Motor neuron (in vitro differentiated cells): ENCODE measurements at regions of chr12 and their contacts with region 1.

Region 1: GRCh38 chr12:106386813-106387535 is 29.4 kb downstream of the POLR3B start:
- ATAC-seq: peak in 3 of 8 experiments; percentile 54 to 88 (median 72)
- H3K4me3 ChIP-seq: no peak overlapping the region
- H3K27ac ChIP-seq: no peak overlapping the region
- H3K4me1 ChIP-seq: peaks cover 0 to 16% of the 10 kb centered on the region in 2 donors

Region 2: GRCh38 chr12:106106884-106107283 is 280.1 kb before region 1 on chr12:
- in situ Hi-C with region 1: no loop called
- ATAC-seq: peak in 5 of 8 experiments; percentile 2 to 20 (median 11)
- H3K4me3 ChIP-seq: no peak overlapping the region
- H3K27ac ChIP-seq: peak overlapping the region; percentile 26 to 49
- H3K4me1 ChIP-seq: peaks cover 57 to 59% of the 10 kb centered on the region in 2 donors

Region 3: DNA sequence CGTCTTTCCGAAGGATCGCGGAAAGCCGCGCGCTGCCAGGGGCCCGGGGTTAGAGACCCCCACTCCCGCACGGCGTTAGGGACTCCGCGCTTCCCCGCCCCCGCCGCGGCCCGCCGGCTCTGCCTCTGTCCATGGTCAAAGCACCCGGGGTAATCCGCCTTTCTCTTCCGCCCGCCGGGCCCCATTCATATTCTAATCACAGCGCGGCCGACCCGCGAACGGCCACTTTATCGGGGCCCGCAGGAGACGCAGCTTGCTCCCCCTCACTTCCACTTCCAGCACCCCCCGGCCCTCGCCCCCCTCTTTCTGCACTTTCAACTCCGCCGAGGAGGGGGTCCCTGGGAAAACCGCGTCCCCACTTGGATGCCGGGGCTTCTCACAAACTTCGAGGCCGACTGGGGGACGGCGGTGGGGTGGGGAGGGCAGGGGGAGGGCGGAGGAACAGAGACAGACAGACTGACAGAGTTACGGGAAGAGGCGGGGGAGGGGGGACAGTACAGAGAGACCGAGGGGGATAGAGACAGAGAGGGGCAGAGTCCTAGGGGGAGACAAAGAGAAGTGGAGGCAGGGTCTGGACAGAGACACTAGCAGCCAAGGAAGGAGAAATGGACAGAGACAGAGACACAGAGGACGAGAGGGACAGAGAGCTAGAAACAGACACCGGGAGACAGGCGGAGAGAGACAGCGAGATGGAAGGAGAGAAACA is 194.7 kb after region 1 on chr12:
- in situ Hi-C with region 1: loop called in 1 of 9 experiments (anchors 25 kb)
- ATAC-seq: peak; percentile 43 to 66 (median 51)
- H3K4me3 ChIP-seq: peak overlapping the region; percentile 42 to 92 (median 78)
- H3K27ac ChIP-seq: peak overlapping the region; percentile 89 to 91
- H3K4me1 ChIP-seq: peaks cover 0 to 6% of the 10 kb centered on the region in 2 donors

Region 4: GRCh38 chr12:106605254-106605653 is 218.3 kb after region 1 on chr12:
- in situ Hi-C with region 1: no loop called
- ATAC-seq: no peak
- H3K4me3 ChIP-seq: no peak overlapping the region
- H3K27ac ChIP-seq: no peak overlapping the region
- H3K4me1 ChIP-seq: peaks cover 17 to 28% of the 10 kb centered on the region in 2 donors

Region 5: DNA sequence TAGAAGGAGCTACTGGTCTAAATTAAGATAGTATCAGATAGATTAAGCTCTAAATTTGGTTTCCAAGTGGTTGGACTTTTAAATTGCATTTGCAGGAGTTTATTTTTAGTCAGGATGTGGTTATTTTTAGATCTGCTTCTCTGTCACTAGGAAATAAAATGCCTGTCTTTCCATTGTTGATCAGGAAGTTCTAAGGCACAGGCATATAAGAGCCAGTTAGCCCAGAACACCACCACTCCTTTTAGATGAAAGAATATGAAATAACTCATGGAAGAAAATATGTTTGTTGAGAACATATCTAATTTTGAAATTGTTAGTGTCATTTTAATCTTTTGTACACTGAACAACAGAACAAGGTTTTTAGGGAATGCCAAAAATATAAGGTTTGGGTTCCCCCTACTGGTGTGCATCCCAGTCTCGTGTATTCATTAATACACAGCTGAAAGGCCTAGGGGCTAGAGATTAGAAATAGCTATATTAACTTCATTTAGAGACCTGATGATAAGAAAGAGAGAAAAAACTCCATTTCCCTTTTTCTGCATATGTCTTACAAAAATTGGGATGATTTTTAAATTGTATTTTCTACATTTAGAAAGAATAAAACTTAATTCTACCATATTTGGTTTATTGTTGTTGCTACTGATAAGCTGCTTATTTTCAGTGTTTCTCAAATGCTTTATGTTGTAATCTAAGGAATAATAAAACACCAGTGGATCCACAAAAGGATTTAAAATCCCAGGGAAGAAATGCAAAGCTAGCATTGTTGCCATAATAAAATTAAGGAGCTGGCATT is 454.7 kb after region 1 on chr12:
- in situ Hi-C with region 1: loop called in 3 of 9 experiments (anchors 25 kb)
- ATAC-seq: peak; percentile 36 to 91 (median 56)
- H3K4me3 ChIP-seq: no peak overlapping the region
- H3K27ac ChIP-seq: no peak overlapping the region
- H3K4me1 ChIP-seq: peaks cover 22 to 26% of the 10 kb centered on the region in 2 donors

Region 6: GRCh38 chr12:106903241-106903945 is 516.4 kb after region 1 on chr12:
- in situ Hi-C with region 1: loop called in 4 of 9 experiments (anchors 25 kb)
- ATAC-seq: peak; percentile 87 to 99 (median 97)
- H3K4me3 ChIP-seq: peak overlapping the region; percentile 25 to 38 (median 27)
- H3K27ac ChIP-seq: no peak overlapping the region
- H3K4me1 ChIP-seq: peaks cover 14 to 16% of the 10 kb centered on the region in 2 donors

Region 7: DNA sequence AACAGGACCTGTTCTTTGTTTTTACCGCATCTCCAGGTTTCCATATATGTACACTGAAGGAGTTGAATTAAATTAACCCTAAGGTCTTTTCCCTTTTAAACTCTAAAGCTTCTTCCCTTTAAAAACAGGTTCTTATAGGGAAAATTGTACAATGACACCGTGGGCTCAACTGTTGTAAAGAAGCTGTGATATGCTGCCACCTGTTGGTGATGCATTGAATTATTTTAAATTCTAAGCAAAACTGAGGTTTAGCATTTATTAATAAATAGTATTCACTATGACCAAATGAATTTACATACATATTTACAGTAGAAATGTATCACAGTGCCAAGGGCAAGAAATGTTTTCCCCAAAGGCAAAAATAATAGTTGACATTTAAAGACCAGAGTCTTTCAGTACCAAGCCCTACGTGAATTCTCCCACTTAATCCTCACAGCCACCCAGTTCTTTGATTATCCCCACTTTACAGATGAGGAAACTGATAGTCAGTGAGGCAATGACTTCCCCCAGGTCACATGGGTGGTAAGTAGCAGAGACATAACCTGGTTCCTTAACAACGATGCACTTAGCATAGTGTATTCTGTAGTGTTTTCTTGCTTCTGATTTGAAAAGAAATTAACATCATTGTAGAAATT is 533.1 kb after region 1 on chr12:
- in situ Hi-C with region 1: loop called in 6 of 9 experiments (anchors 10 to 25 kb)
- ATAC-seq: peak in 2 of 8 experiments; percentile 3 to 18
- H3K4me3 ChIP-seq: no peak overlapping the region
- H3K27ac ChIP-seq: no peak overlapping the region
- H3K4me1 ChIP-seq: peaks cover 3 to 14% of the 10 kb centered on the region in 2 donors